CD14-positive monocyte (primary cell): ENCODE measurements at regions of chr6 and their contacts with region 1.

Region 1: GRCh38 chr6:33815854-33816253 is 12.1 kb upstream of the MLN start:
- DNase-seq: no peak
- H3K4me3 ChIP-seq: no peak overlapping the region
- H3K4me3 Mint-ChIP-seq: no peak overlapping the region
- H3K27ac ChIP-seq: no peak overlapping the region
- H3K27ac Mint-ChIP-seq: no peak overlapping the region
- H3K4me1 ChIP-seq: no peaks in the 10 kb centered on the region
- H3K4me1 Mint-ChIP-seq: peaks cover under 1% of the 10 kb centered on the region
- H3K27me3 ChIP-seq: peaks cover 4 to 10% of the 10 kb centered on the region in 2 donors
- H3K27me3 Mint-ChIP-seq: peaks cover 14 to 39% (median 25%) of the 10 kb centered on the region in 3 donors
- CTCF ChIP-seq: no peak

Region 2: DNA sequence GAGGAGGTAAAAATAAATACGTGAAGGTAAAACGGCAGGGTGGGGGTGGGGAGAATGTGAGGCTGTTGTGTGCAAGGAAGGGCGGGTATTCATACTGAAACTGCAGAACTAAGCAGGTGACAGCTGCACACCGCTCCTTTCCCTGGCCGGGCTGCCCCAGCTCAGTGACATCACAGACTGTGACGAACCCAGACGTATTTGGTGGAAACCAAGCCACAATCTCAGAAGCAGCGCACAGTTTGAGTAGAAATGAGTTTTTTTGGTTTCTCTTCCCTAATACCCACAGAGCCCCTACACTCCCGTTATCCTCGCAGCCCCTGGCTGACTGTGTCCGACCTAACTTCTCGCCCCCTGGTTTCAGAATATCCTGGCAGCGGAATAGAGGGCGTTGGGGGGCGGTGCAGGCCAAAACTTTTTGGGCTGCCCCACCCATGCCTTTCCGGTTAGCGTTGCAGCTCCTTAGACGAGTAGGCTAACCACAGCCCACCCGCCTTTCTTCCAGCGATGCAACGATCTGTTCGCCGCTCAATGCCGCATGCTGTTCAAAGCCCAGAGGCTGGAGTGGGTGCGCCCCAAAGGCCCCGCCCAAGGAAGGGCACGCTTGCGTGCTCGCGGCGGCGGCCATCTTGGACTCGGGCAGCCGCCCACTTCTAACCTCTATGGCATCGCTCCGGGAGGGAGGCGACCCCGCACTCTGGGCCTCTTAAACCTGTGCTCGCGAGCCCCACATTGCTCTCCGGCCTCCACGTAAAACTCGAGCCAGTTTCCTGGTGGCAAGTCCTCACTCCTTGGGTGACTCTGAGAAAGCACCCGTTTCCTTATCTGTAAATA is 244.8 kb before region 1 on chr6:
- intact Hi-C with region 1: no loop called
- DNase-seq: peak; percentile 46 to 79 (median 66)
- H3K4me3 ChIP-seq: peak overlapping the region; percentile 58 to 87 (median 66)
- H3K4me3 Mint-ChIP-seq: peak overlapping the region; percentile 95
- H3K27ac ChIP-seq: peak overlapping the region; percentile 78 to 79
- H3K27ac Mint-ChIP-seq: peak overlapping the region; percentile 92 to 99 (median 96)
- H3K4me1 ChIP-seq: peaks cover 13 to 20% of the 10 kb centered on the region in 2 donors
- H3K4me1 Mint-ChIP-seq: peaks cover 20% of the 10 kb centered on the region
- H3K27me3 ChIP-seq: no peaks in the 10 kb centered on the region
- H3K27me3 Mint-ChIP-seq: peaks cover 0 to 1% (median 0%) of the 10 kb centered on the region in 3 donors
- CTCF ChIP-seq: no peak

Region 3: GRCh38 chr6:33779290-33779689 is 36.6 kb before region 1 on chr6:
- intact Hi-C with region 1: loop called in 1 of 2 experiments (anchors 5 kb)
- DNase-seq: no peak
- H3K4me3 ChIP-seq: no peak overlapping the region
- H3K4me3 Mint-ChIP-seq: no peak overlapping the region
- H3K27ac ChIP-seq: no peak overlapping the region
- H3K27ac Mint-ChIP-seq: no peak overlapping the region
- H3K4me1 ChIP-seq: no peaks in the 10 kb centered on the region
- H3K4me1 Mint-ChIP-seq: no peaks in the 10 kb centered on the region
- H3K27me3 ChIP-seq: no peaks in the 10 kb centered on the region
- H3K27me3 Mint-ChIP-seq: peaks cover 0 to 2% (median 0%) of the 10 kb centered on the region in 3 donors
- CTCF ChIP-seq: no peak

Region 4: DNA sequence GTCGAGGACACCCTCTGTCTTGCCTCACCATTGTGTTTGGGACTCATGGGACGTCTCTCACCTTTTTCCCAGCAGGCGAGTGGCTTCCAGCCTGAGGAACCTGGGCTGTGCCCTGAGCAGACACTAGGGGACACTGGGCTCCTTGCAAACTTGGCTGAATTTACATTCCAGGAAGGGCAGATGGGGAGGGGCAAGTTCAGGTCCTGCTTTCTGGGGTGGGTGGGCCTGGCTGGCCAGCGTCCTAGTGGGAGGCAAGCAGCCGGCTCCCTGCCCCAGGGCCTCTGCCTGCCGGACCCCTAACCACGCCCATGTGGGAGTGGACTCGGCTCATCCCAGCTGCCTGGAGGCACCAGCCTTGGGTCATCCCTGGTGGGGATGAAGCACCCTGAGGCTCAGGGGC is 36.1 kb after region 1 on chr6:
- intact Hi-C with region 1: no loop called
- DNase-seq: no peak
- H3K4me3 ChIP-seq: no peak overlapping the region
- H3K4me3 Mint-ChIP-seq: no peak overlapping the region
- H3K27ac ChIP-seq: no peak overlapping the region
- H3K27ac Mint-ChIP-seq: peak overlapping the region in 1 of 7 donors; percentile 33
- H3K4me1 ChIP-seq: no peaks in the 10 kb centered on the region
- H3K4me1 Mint-ChIP-seq: peaks cover 4% of the 10 kb centered on the region
- H3K27me3 ChIP-seq: peaks cover 0 to 36% of the 10 kb centered on the region in 2 donors
- H3K27me3 Mint-ChIP-seq: peaks cover 44 to 51% (median 47%) of the 10 kb centered on the region in 3 donors
- CTCF ChIP-seq: no peak